ENCODE measurements at regions of chr5 and their contacts with region 1.

Region 1: GRCh38 chr5:159106569-159107282 is 7.0 kb upstream of the EBF1 start:
- DNase-seq: peak; percentile 47 to 66 (median 52)
- H3K4me3 ChIP-seq: peak overlapping the region; percentile 44
- H3K4me3 Mint-ChIP-seq: peak overlapping the region in 6 of 7 donors; percentile 78 to 92 (median 83)
- H3K27ac ChIP-seq: no peak overlapping the region
- H3K27ac Mint-ChIP-seq: peak overlapping the region in 1 of 8 donors; percentile 21
- H3K4me1 ChIP-seq: peaks cover 18% of the 10 kb centered on the region
- H3K4me1 Mint-ChIP-seq: peaks cover 27 to 32% (median 27%) of the 10 kb centered on the region in 3 donors
- H3K27me3 ChIP-seq: peaks cover 24% of the 10 kb centered on the region
- H3K27me3 Mint-ChIP-seq: peaks cover 48 to 68% of the 10 kb centered on the region in 2 donors

Region 2: DNA sequence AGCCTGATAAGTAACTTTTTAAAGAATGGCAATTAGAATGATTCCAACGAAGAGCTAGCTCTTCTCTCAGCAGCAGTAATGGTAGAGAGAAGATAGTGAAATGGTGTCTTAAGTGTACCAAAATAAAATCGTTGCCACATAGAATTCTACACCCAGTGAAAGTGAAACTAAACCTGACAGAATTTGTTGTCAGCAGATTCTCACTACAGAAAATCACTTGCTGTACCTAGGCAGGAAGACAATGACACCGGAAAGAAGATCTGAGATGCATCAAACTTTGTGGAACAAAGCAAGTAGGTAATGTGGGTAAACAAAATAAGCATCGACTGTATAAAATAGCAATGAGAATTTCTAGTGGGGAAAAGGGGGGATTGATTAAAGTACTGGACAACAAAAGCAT is 13.7 kb after region 1 on chr5:
- CTCF ChIA-PET with region 1: interaction called, 10 read pairs
- POLR2A ChIA-PET with region 1: interaction called, 3 read pairs
- DNase-seq: peak in 2 of 5 donors; percentile 41 to 48
- H3K4me3 ChIP-seq: peak overlapping the region; percentile 15
- H3K4me3 Mint-ChIP-seq: peak overlapping the region; percentile 36 to 78 (median 69)
- H3K27ac ChIP-seq: no peak overlapping the region
- H3K27ac Mint-ChIP-seq: peak overlapping the region; percentile 72 to 93 (median 86)
- H3K4me1 ChIP-seq: peaks cover 11% of the 10 kb centered on the region
- H3K4me1 Mint-ChIP-seq: peaks cover 17 to 21% (median 19%) of the 10 kb centered on the region in 3 donors
- H3K27me3 ChIP-seq: no peaks in the 10 kb centered on the region
- H3K27me3 Mint-ChIP-seq: peaks cover 2 to 14% of the 10 kb centered on the region in 2 donors

Region 3: DNA sequence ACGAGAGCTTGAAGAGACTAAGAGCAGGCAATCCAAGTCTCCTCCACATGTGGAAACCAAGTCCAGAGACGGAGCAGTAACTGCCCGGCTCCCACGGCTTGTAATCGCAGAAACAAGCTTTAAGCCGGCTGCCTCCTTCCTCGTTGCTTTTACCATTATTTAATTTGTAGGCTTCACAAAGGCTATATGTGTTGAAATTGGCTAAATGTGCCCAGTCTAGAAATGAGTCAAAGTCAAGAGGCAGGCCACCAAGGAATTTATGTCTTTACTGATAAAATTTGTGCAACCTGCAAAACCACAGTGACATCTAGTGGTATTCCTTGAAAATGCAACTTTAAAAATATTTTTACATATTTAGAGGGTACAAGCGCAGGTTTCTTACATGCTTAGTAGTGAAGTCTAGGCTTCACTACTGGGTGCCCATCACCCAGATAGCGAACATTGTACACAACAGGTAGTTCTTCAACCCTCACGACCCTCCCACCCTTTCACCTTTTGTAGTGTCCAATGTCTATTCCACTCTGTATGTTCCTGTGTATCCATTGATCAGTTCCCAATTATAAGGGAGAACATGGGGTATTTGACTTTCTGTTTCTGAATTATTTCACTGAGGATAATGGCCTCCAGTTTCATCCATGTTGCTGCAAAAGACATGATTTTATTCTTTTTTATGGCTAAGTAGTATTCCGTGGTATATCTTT is 26.5 kb after region 1 on chr5:
- CTCF ChIA-PET with region 1: interaction called, 17 read pairs
- POLR2A ChIA-PET with region 1: no interaction called
- DNase-seq: peak in 2 of 5 donors; percentile 36 to 38
- H3K4me3 ChIP-seq: no peak overlapping the region
- H3K4me3 Mint-ChIP-seq: no peak overlapping the region
- H3K27ac ChIP-seq: no peak overlapping the region
- H3K27ac Mint-ChIP-seq: no peak overlapping the region
- H3K4me1 ChIP-seq: no peaks in the 10 kb centered on the region
- H3K4me1 Mint-ChIP-seq: no peaks in the 10 kb centered on the region
- H3K27me3 ChIP-seq: no peaks in the 10 kb centered on the region
- H3K27me3 Mint-ChIP-seq: peaks cover 9 to 49% of the 10 kb centered on the region in 2 donors

Measured in CD8-positive, alpha-beta memory T cell (primary cell).